ENCODE measurements at regions of chr1 and their contacts with region 1.

Region 1: DNA sequence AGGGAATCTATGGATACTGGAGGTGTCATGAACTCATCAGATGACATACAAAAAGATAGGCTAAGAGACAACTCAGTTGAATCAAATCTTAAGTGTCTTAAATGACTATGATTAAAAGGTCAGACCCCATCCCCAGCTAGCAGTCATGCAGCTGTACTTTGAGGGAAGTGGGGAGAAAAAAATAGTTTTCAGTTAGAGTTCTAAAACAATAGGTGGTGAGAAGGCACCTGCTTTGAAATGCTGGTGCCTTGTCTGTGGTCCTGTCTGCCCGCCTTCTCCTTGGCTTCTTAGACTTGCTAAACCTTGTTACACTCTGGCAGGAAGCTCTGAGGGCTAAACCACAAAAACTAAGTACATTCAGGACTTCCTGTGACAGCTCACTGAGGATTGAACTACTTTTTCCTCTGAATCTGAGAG is 15.3 kb downstream of the CD2 start:
- DNase-seq: peak; percentile 85 to 94 (median 89)
- H3K4me3 ChIP-seq: peak overlapping the region in 1 of 2 donors; percentile 24
- H3K4me3 Mint-ChIP-seq: peak overlapping the region; percentile 29 to 94 (median 74)
- H3K27ac ChIP-seq: peak overlapping the region; percentile 88
- H3K27ac Mint-ChIP-seq: peak overlapping the region; percentile 97 to 99 (median 98)
- H3K4me1 ChIP-seq: peaks cover 87% of the 10 kb centered on the region
- H3K4me1 Mint-ChIP-seq: peaks cover 75 to 91% (median 82%) of the 10 kb centered on the region in 4 donors
- H3K27me3 ChIP-seq: no peaks in the 10 kb centered on the region
- H3K27me3 Mint-ChIP-seq: no peaks in the 10 kb centered on the region

Region 2: DNA sequence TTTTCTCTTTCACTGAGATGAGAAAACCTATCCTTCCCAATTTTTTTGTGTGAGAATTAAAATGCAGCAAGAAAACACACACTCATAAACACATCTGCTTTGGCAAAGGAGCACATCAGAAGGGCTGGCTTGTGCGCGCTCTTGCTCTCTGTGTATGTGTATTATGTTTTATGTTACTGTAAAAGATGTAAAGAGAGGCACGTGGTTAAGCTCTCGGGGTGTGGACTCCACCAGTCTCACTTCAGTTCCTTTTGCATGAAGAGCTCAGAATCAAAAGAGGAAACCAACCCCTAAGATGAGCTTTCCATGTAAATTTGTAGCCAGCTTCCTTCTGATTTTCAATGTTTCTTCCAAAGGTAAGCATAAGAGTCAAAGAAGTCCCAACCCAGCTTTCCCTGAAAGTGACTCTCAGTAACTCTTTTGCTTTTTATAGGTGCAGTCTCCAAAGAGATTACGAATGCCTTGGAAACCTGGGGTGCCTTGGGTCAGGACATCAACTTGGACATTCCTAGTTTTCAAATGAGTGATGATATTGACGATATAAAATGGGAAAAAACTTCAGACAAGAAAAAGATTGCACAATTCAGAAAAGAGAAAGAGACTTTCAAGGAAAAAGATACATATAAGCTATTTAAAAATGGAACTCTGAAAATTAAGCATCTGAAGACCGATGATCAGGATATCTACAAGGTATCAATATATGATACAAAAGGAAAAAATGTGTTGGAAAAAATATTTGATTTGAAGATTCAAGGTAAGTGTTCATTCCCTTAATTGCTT is 15.2 kb before region 1 on chr1 and contains the start of gene CD2:
- CTCF ChIA-PET with region 1: interaction called, 69 read pairs
- POLR2A ChIA-PET with region 1: interaction called, 1,832 read pairs
- intact Hi-C with region 1: loop called (anchors 1 kb)
- DNase-seq: peak; percentile 66 to 74 (median 71)
- H3K4me3 ChIP-seq: peak within 1 kb of the TSS; percentile 53 to 72
- H3K4me3 Mint-ChIP-seq: peak within 1 kb of the TSS; percentile 96 to 100 (median 98)
- H3K27ac ChIP-seq: peak within 1 kb of the TSS; percentile 88
- H3K27ac Mint-ChIP-seq: peak within 1 kb of the TSS; percentile 96 to 100 (median 99)
- H3K4me1 ChIP-seq: peaks cover 34% of the 10 kb centered on the region
- H3K4me1 Mint-ChIP-seq: peaks cover 25 to 64% (median 33%) of the 10 kb centered on the region in 4 donors
- H3K27me3 ChIP-seq: no peaks in the 10 kb centered on the region
- H3K27me3 Mint-ChIP-seq: no peaks in the 10 kb centered on the region
- total RNA-seq, gene CD2: 305 to 316 TPM

Region 3: GRCh38 chr1:116785006-116785405 is 15.4 kb after region 1 on chr1:
- CTCF ChIA-PET with region 1: interaction called, 4 read pairs
- POLR2A ChIA-PET with region 1: interaction called, 1,208 read pairs
- intact Hi-C with region 1: no loop called
- DNase-seq: no peak
- H3K4me3 ChIP-seq: no peak overlapping the region
- H3K4me3 Mint-ChIP-seq: no peak overlapping the region
- H3K27ac ChIP-seq: no peak overlapping the region
- H3K27ac Mint-ChIP-seq: peak overlapping the region in 1 of 7 donors; percentile 49
- H3K4me1 ChIP-seq: no peaks in the 10 kb centered on the region
- H3K4me1 Mint-ChIP-seq: peaks cover 8 to 30% (median 19%) of the 10 kb centered on the region in 4 donors
- H3K27me3 ChIP-seq: no peaks in the 10 kb centered on the region
- H3K27me3 Mint-ChIP-seq: no peaks in the 10 kb centered on the region

Measured in CD4-positive, alpha-beta memory T cell (primary cell).